Naive thymus-derived CD4-positive, alpha-beta T cell (primary cell): ENCODE measurements at regions of chr12 and their contacts with region 1.

Region 1: GRCh38 chr12:91926848-91927247 is 218.8 kb downstream of the BTG1 start:
- DNase-seq: no peak
- ATAC-seq: no peak
- H3K4me3 ChIP-seq: no peak overlapping the region
- H3K4me3 Mint-ChIP-seq: no peak overlapping the region
- H3K27ac ChIP-seq: no peak overlapping the region
- H3K27ac Mint-ChIP-seq: no peak overlapping the region
- H3K4me1 ChIP-seq: peaks cover 0 to 1% of the 10 kb centered on the region in 2 donors
- H3K4me1 Mint-ChIP-seq: peaks cover 0 to 27% (median 12%) of the 10 kb centered on the region in 7 donors
- H3K27me3 ChIP-seq: no peaks in the 10 kb centered on the region
- H3K27me3 Mint-ChIP-seq: no peaks in the 10 kb centered on the region

Region 2: DNA sequence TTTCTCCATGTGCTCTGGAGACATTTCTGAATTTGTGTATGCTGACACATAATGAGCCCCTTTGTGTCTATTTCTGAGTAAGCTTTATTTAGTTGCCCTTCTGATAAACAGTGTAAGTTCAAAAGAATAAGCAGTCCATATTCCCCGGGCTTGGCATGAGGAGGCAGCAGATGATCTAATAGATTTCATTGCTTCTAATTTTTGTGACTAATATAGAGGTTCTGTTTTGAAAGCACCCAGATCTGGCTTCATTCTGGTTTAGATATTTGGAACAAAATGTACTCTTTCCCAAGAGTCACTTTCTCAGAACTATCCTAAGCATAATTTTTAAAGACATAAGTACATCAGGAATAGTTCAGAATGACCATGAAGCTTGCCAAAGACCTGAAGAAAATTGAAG is 72.1 kb before region 1 on chr12:
- CTCF ChIA-PET with region 1: no interaction called
- POLR2A ChIA-PET with region 1: no interaction called
- intact Hi-C with region 1: no loop called
- DNase-seq: no peak
- ATAC-seq: no peak
- H3K4me3 ChIP-seq: no peak overlapping the region
- H3K4me3 Mint-ChIP-seq: no peak overlapping the region
- H3K27ac ChIP-seq: no peak overlapping the region
- H3K27ac Mint-ChIP-seq: peak overlapping the region in 1 of 9 donors; percentile 30
- H3K4me1 ChIP-seq: peaks cover 0 to 7% of the 10 kb centered on the region in 2 donors
- H3K4me1 Mint-ChIP-seq: peaks cover 5 to 58% (median 18%) of the 10 kb centered on the region in 7 donors
- H3K27me3 ChIP-seq: no peaks in the 10 kb centered on the region
- H3K27me3 Mint-ChIP-seq: no peaks in the 10 kb centered on the region

Region 3: DNA sequence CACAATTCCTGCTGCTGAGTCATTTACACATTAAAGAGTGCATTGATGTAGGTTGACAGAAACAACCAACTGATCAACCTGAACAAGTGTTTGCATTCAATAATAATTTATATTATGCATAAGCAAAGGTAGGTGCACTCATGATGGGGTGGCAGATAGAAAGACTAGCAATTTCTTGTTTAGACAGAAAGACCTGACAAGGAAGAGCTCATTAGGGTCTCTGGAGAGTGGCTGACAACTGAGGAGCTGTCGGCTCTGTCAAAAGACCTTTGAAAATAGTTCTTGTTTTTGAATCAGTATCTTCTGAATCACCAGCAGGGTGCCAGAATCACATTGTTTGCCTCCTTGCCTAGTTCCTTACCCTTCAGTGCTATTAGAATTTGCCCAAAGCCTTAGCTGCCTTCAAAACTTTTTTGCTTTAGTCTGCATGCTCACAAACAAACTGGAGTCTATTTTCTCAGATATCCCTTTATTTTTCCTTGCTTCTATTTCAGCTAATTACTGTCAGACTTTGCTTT is 15.9 kb before region 1 on chr12:
- CTCF ChIA-PET with region 1: interaction called, 6 read pairs
- POLR2A ChIA-PET with region 1: interaction called, 4 read pairs
- intact Hi-C with region 1: loop called in 1 of 2 experiments (anchors 2 kb)
- DNase-seq: peak in 4 of 9 donors; percentile 7 to 26 (median 15)
- ATAC-seq: no peak
- H3K4me3 ChIP-seq: no peak overlapping the region
- H3K4me3 Mint-ChIP-seq: no peak overlapping the region
- H3K27ac ChIP-seq: no peak overlapping the region
- H3K27ac Mint-ChIP-seq: peak overlapping the region in 4 of 9 donors; percentile 9 to 67 (median 30)
- H3K4me1 ChIP-seq: no peaks in the 10 kb centered on the region
- H3K4me1 Mint-ChIP-seq: peaks cover 0 to 38% (median 23%) of the 10 kb centered on the region in 7 donors
- H3K27me3 ChIP-seq: no peaks in the 10 kb centered on the region
- H3K27me3 Mint-ChIP-seq: no peaks in the 10 kb centered on the region